ENCODE measurements at regions of chr15 and their contacts with region 1.

Region 1: GRCh38 chr15:82046666-82047452 is 1.0 kb upstream of the MEX3B start:
- DNase-seq: peak; percentile 85 to 93 (median 91)
- ATAC-seq: peak; percentile 86
- H3K4me3 ChIP-seq: peak overlapping the region; percentile 93
- H3K4me3 Mint-ChIP-seq: peak overlapping the region; percentile 88 to 94 (median 91)
- H3K27ac ChIP-seq: peak overlapping the region; percentile 72
- H3K27ac Mint-ChIP-seq: peak overlapping the region in 8 of 9 donors; percentile 31 to 93 (median 82)
- H3K4me1 ChIP-seq: peaks cover 0 to 8% of the 10 kb centered on the region in 2 donors
- H3K4me1 Mint-ChIP-seq: peaks cover 4 to 21% (median 11%) of the 10 kb centered on the region in 7 donors
- H3K27me3 ChIP-seq: no peaks in the 10 kb centered on the region
- H3K27me3 Mint-ChIP-seq: peaks cover 8 to 45% (median 11%) of the 10 kb centered on the region in 5 donors

Region 2: DNA sequence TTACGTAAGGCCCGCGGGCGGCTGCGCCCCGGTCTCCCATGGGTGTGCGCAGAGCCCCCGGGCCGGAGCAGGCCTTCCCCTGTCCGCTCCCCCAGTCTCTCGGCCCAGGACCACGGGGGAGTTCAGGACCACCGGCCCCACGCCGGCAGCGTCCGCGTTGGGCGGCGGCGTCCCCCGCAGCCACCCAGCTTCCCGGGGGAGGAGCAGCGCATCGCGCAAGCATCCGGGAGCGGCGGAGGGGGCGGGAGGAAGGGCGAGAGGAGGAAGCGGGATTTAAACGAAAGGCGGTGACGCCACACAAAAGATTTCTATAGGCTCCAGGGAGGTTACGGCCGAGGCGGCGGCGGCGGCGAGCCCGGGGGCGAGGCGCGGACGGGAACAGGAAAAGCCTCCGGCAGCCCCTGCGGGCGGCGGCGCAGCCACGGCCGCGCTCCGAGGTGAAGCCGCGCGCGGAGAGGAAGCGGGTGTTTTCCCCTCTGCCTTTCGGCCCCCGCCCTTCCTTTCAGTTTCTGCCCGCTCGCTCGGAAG is 1046.2 kb before region 1 on chr15 and contains the start of gene TLNRD1:
- CTCF ChIA-PET with region 1: no interaction called
- POLR2A ChIA-PET with region 1: no interaction called
- intact Hi-C with region 1: loop called (anchors 2 to 5 kb)
- DNase-seq: peak; percentile 63 to 90 (median 79)
- ATAC-seq: peak; percentile 81
- H3K4me3 ChIP-seq: peak within 1 kb of the TSS; percentile 83
- H3K4me3 Mint-ChIP-seq: peak within 1 kb of the TSS; percentile 91 to 99 (median 96)
- H3K27ac ChIP-seq: peak within 1 kb of the TSS; percentile 91
- H3K27ac Mint-ChIP-seq: peak within 1 kb of the TSS; percentile 94 to 98 (median 97)
- H3K4me1 ChIP-seq: peaks cover 24 to 36% of the 10 kb centered on the region in 2 donors
- H3K4me1 Mint-ChIP-seq: peaks cover 24 to 66% (median 56%) of the 10 kb centered on the region in 7 donors
- H3K27me3 ChIP-seq: no peaks in the 10 kb centered on the region
- H3K27me3 Mint-ChIP-seq: no peaks in the 10 kb centered on the region
- total RNA-seq, gene TLNRD1: 11.5 to 33.0 (median 22.5) TPM

Region 3: DNA sequence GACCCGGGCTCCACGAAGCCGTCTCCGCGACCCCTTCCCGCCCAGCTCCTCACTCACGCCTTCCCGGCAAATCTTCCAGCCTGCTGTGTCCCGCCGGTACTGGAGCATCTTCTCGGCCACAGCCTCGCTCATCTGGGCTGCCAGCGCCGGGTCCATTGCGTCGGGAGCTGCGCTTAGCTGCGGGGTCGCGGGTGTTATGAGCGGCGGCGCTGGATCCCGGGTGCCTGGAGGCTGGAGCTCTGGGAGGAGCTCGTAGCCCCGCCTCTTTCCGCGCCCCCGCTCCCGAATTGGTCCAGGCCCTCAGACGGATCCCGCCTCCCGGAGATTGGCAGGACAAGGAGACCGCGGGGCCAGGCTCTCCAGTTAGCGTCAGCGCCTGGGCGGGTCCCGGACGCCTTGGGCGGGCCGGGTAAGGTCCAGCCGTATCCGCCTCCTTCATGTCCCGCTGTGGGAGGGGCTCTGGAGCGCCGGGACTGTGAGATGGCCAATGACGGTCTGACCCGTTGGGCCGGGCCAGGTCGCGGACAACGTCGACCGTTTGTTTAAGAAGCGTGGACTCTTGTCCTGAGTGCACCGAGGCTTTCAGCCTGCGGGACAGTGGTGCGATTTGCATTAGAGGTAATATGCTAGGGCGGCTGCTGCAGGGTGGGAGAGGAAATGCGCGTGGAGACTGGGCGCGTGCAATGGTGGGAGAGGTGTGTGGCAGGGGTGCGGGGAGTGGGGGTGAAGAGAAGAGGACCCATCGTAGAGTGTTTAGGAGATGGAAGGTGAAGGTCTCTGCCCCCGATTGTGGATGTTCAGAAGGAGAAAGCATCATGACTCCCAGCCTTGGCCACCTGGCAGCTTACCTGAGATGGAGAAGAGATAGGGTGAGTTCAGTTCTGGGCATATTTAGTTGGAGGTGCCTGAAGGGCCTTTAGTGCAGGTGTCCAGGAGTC is 722.6 kb before region 1 on chr15 and contains the start of gene STARD5:
- CTCF ChIA-PET with region 1: no interaction called
- POLR2A ChIA-PET with region 1: no interaction called
- intact Hi-C with region 1: loop called in 1 of 2 experiments (anchors 5 kb)
- DNase-seq: peak; percentile 82 to 97 (median 92)
- ATAC-seq: peak; percentile 99
- H3K4me3 ChIP-seq: peak within 1 kb of the TSS; percentile 86
- H3K4me3 Mint-ChIP-seq: peak within 1 kb of the TSS; percentile 90 to 98 (median 94)
- H3K27ac ChIP-seq: peak within 1 kb of the TSS; percentile 78
- H3K27ac Mint-ChIP-seq: peak within 1 kb of the TSS; percentile 87 to 97 (median 92)
- H3K4me1 ChIP-seq: peaks cover 5 to 20% of the 10 kb centered on the region in 2 donors
- H3K4me1 Mint-ChIP-seq: peaks cover 31 to 65% (median 60%) of the 10 kb centered on the region in 7 donors
- H3K27me3 ChIP-seq: no peaks in the 10 kb centered on the region
- H3K27me3 Mint-ChIP-seq: no peaks in the 10 kb centered on the region
- total RNA-seq, gene STARD5: 5.0 to 11.7 (median 10.1) TPM

Region 4: GRCh38 chr15:81480645-81481053 is 566.2 kb before region 1 on chr15:
- CTCF ChIA-PET with region 1: no interaction called
- POLR2A ChIA-PET with region 1: no interaction called
- intact Hi-C with region 1: loop called in 1 of 2 experiments (anchors 1 kb)
- DNase-seq: peak in 8 of 9 donors; percentile 10 to 62 (median 48)
- ATAC-seq: peak; percentile 76
- H3K4me3 ChIP-seq: no peak overlapping the region
- H3K4me3 Mint-ChIP-seq: peak overlapping the region in 5 of 10 donors; percentile 21 to 66 (median 53)
- H3K27ac ChIP-seq: no peak overlapping the region
- H3K27ac Mint-ChIP-seq: no peak overlapping the region
- H3K4me1 ChIP-seq: no peaks in the 10 kb centered on the region
- H3K4me1 Mint-ChIP-seq: peaks cover 0 to 3% (median 0%) of the 10 kb centered on the region in 7 donors
- H3K27me3 ChIP-seq: no peaks in the 10 kb centered on the region
- H3K27me3 Mint-ChIP-seq: peaks cover 0 to 9% (median 0%) of the 10 kb centered on the region in 5 donors

Region 5: GRCh38 chr15:82680200-82681102 is 633.6 kb after region 1 on chr15:
- CTCF ChIA-PET with region 1: no interaction called
- POLR2A ChIA-PET with region 1: no interaction called
- intact Hi-C with region 1: loop called in 1 of 2 experiments (anchors 2 kb)
- DNase-seq: peak; percentile 47 to 88 (median 82)
- ATAC-seq: peak; percentile 98
- H3K4me3 ChIP-seq: peak overlapping the region; percentile 97
- H3K4me3 Mint-ChIP-seq: peak overlapping the region; percentile 82 to 96 (median 93)
- H3K27ac ChIP-seq: peak overlapping the region; percentile 83
- H3K27ac Mint-ChIP-seq: peak overlapping the region in 8 of 9 donors; percentile 91 to 97 (median 94)
- H3K4me1 ChIP-seq: peaks cover 9% of the 10 kb centered on the region in 2 donors
- H3K4me1 Mint-ChIP-seq: peaks cover 0 to 19% (median 14%) of the 10 kb centered on the region in 7 donors
- H3K27me3 ChIP-seq: no peaks in the 10 kb centered on the region
- H3K27me3 Mint-ChIP-seq: peaks cover 0 to 42% (median 0%) of the 10 kb centered on the region in 5 donors